Heart left ventricle (tissue), 16 donors: ENCODE measurements at regions of chr4 and their contacts with region 1.

Region 1: GRCh38 chr4:70239884-70240591 is 2.4 kb upstream of the CSN3 start:
- DNase-seq: no peak
- ATAC-seq: no peak
- H3K4me3 ChIP-seq: no peak overlapping the region
- H3K27ac ChIP-seq: no peak overlapping the region
- H3K4me1 ChIP-seq: no peaks in the 10 kb centered on the region
- H3K27me3 ChIP-seq: no peaks in the 10 kb centered on the region
- CTCF ChIP-seq: no peak
- POLR2A ChIP-seq: no peak

Region 2: DNA sequence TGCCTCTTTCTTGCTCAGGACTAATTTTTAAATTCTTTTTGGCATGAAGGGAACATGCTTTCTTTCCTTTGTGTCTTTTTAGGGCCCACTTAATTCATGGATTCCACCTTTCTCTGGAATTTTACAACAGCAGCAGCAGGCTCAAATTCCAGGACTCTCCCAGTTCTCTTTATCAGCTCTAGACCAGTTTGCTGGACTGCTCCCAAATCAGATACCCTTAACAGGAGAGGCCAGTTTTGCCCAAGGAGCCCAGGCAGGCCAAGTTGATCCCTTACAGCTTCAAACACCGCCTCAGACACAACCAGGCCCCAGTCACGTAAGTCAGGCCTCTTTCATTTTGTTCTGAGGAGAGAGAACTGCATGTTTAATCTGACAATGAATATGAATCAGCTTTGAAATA is 42.2 kb before region 1 on chr4:
- intact Hi-C with region 1: no loop called
- DNase-seq: no peak
- ATAC-seq: no peak
- H3K4me3 ChIP-seq: no peak overlapping the region
- H3K27ac ChIP-seq: no peak overlapping the region
- H3K4me1 ChIP-seq: no peaks in the 10 kb centered on the region
- H3K27me3 ChIP-seq: no peaks in the 10 kb centered on the region
- CTCF ChIP-seq: no peak
- POLR2A ChIP-seq: no peak

Region 3: DNA sequence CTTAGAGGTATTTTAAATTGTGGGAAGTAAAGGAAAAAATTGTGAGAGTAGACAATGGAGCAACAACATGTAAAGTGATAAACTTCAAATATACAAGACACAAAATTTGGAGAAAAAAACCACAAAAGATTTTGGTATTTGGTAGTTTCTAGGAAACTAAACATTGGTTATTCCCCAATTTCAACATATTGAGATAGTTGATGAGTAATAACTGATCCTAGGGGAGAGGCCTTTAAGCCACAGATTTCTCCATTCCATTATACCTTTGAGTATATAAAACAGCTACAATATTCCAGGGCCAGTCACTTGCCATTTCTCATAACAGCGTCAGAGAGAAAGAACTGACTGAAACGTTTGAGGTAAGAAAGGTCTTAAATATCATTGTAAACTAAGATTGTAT is 14.2 kb before region 1 on chr4 and contains the start of gene FDCSP:
- intact Hi-C with region 1: loop called in 1 of 10 experiments (anchors 2 kb)
- DNase-seq: no peak
- ATAC-seq: no peak
- H3K4me3 ChIP-seq: no peak within 1 kb of the TSS
- H3K27ac ChIP-seq: no peak within 1 kb of the TSS
- H3K4me1 ChIP-seq: no peaks in the 10 kb centered on the region
- H3K27me3 ChIP-seq: no peaks in the 10 kb centered on the region
- CTCF ChIP-seq: no peak
- POLR2A ChIP-seq: no peak
- total RNA-seq, gene FDCSP: not detected

Region 4: GRCh38 chr4:71456841-71457240 is 1216.8 kb after region 1 on chr4:
- intact Hi-C with region 1: no loop called
- DNase-seq: peak in 2 of 5 donors; percentile 16 to 22
- ATAC-seq: peak; percentile 93 to 98 (median 98)
- H3K4me3 ChIP-seq: no peak overlapping the region
- H3K27ac ChIP-seq: peak overlapping the region in 10 of 12 donors; percentile 8 to 74 (median 44)
- H3K4me1 ChIP-seq: peaks cover 0 to 12% (median 0%) of the 10 kb centered on the region in 12 donors
- H3K27me3 ChIP-seq: no peaks in the 10 kb centered on the region
- CTCF ChIP-seq: no peak
- POLR2A ChIP-seq: no peak